GM10248 (cell line): ENCODE measurements at regions of chr1 and their contacts with region 1.

Region 1: GRCh38 chr1:45569962-45570581 is 13.8 kb upstream of the NASP start:
- DNase-seq: peak; percentile 71
- CTCF ChIP-seq: peak; percentile 96

Region 2: GRCh38 chr1:45359882-45360513 is 210.1 kb before region 1 on chr1:
- CTCF ChIA-PET with region 1: interaction called, 17 read pairs
- POLR2A ChIA-PET with region 1: no interaction called
- DNase-seq: no peak
- CTCF ChIP-seq: peak; percentile 58

Region 3: DNA sequence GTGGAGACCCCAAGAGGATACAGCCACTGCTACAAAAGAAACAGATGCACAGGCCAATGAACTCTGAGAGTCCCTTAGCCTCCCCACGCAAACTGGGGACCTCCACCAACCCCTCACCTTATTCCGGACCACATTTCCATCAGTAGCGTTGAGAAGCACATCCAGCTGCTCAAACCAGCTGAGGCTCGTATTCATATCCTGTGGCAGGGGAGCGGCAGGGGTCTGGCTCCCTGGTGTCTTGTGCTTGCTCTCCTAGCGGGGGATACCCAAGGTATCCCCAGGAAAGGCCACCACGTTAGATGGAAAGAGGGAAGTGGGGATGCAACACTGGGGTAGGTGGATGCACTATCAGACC is 70.7 kb before region 1 on chr1:
- CTCF ChIA-PET with region 1: interaction called, 51 read pairs
- POLR2A ChIA-PET with region 1: no interaction called
- DNase-seq: no peak
- CTCF ChIP-seq: no peak

Region 4: DNA sequence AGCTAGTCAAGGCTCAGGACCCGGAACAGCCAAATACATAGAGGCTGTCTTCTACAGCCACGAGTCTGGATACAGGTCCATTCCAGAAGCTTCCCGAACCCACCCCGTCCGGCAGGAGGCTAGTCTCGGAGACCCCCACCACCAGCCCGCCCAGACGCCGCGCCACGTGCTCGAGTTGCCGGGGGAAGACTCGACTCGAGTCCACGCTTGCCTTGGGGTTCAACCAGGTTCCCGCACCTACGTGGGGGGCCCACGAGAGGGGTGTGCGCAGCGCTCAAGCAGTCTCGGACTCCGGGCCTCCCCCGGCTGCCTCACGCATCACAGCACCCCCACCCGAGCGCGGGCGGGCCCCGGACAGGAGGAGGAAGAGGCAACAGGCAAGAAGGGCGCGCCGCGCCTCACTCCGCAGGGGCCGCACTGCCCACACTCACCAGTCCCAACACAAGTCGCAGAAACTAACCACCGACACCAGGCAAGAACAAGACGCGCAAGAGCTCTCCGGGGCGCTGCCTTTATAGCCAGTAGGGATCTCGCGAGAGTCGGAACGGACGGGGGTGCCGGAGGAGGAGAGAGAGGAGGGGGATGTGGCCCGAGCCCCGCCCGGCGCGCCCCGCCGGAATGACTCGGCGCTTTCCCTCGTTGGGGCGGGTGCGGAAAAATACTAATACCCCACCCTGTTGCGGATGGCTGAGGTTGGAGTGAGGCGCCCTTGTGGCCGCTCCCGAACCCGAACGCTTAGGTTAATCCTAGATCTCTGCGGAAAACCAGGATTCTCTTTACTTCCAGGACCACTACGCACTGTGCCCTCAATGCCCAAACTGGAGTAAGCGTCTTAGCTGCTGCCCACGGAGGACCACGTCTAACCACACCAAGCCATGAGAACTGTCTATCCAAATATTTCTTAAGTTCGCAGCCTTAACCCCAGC is 48.4 kb before region 1 on chr1 and contains the start of gene PRDX1:
- CTCF ChIA-PET with region 1: interaction called, 64 read pairs
- POLR2A ChIA-PET with region 1: interaction called, 17 read pairs
- DNase-seq: peak; percentile 95
- CTCF ChIP-seq: no peak

Region 5: DNA sequence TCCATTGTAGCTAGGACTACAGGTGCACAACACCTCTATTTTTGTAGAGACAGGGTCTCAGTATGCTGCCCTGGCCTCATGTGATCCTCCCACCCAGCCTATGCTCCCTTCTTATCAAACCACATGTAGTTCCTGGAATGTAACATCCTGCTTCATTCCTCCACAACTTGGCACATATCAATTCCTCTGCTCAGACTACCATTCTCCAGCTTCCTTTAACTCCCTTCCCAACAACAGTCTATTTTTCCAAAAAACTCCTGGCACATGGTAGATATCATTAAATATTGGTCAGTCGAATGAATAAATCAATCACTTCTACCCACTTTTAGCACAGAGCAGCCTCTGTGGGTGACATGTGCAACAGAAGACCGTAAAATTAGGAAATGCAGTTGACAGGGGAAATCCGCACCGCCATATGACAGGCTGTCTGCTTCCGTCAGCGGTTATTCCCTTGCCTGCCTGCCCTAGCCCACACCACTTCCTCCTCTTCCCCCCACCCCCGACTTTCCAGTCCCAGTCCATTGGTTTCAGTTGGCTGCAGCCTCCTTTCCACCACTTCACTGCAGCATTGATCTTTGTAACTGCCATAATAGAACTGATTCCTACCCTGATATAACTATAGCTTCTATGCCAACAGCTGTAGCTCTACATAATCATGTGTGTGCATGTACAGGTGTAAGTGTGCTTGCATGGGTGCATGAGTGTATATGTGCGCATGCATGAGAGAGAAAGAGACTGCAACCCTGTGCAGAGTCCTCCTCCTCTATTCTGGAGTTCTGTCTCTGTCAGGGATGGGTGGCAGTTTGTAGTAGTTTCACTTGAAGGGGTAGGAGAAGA is 26.3 kb before region 1 on chr1:
- CTCF ChIA-PET with region 1: interaction called, 43 read pairs
- POLR2A ChIA-PET with region 1: no interaction called
- DNase-seq: peak; percentile 49
- CTCF ChIP-seq: no peak

Region 6: GRCh38 chr1:45557422-45557944 is 12.6 kb before region 1 on chr1:
- CTCF ChIA-PET with region 1: interaction called, 33 read pairs
- POLR2A ChIA-PET with region 1: interaction called, 6 read pairs
- DNase-seq: peak; percentile 9
- CTCF ChIP-seq: no peak

Region 7: GRCh38 chr1:45854724-45855123 is 284.7 kb after region 1 on chr1:
- CTCF ChIA-PET with region 1: no interaction called
- POLR2A ChIA-PET with region 1: no interaction called
- DNase-seq: no peak
- CTCF ChIP-seq: no peak